HCT116 (cell line): ENCODE measurements at regions of chr17 and their contacts with region 1.

Region 1: GRCh38 chr17:3535253-3535995 is 22.2 kb downstream of the TRPV3 start:
- DNase-seq: peak; percentile 76
- ATAC-seq: peak; percentile 86
- H3K4me3 ChIP-seq: peak overlapping the region; percentile 39 to 54
- H3K27ac ChIP-seq: peak overlapping the region; percentile 60; the same call in 1 of the 2 replicates
- H3K4me1 ChIP-seq: peaks cover 5 to 16% of the 10 kb centered on the region in 2 experiments; a peak in 3 of 4 replicates
- H3K27me3 ChIP-seq: no peaks in the 10 kb centered on the region
- CTCF ChIP-seq: peak; percentile 46 to 80 (median 79)
- POLR2A ChIP-seq: no peak
- RAD21 ChIP-seq: peak; percentile 68

Region 2: GRCh38 chr17:3048767-3049471 is 486.5 kb before region 1 on chr17:
- CTCF ChIA-PET with region 1: no interaction called
- POLR2A ChIA-PET with region 1: no interaction called
- RAD21 ChIA-PET with region 1: no interaction called
- intact Hi-C with region 1: loop called (anchors 10 kb)
- DNase-seq: peak; percentile 98
- ATAC-seq: peak; percentile 99
- H3K4me3 ChIP-seq: peak overlapping the region; percentile 70 to 71
- H3K27ac ChIP-seq: peak overlapping the region; percentile 47; the same call in 1 of the 2 replicates
- H3K4me1 ChIP-seq: peaks cover 5 to 17% of the 10 kb centered on the region in 2 experiments; a peak in 3 of 4 replicates
- H3K27me3 ChIP-seq: no peaks in the 10 kb centered on the region
- CTCF ChIP-seq: peak; percentile 50 to 78 (median 74)
- POLR2A ChIP-seq: peak; percentile 28
- RAD21 ChIP-seq: peak; percentile 96

Region 3: GRCh38 chr17:3385869-3386816 is 149.3 kb before region 1 on chr17 and contains the start of gene OR3A2:
- CTCF ChIA-PET with region 1: no interaction called
- POLR2A ChIA-PET with region 1: no interaction called
- RAD21 ChIA-PET with region 1: no interaction called
- intact Hi-C with region 1: no loop called
- DNase-seq: no peak
- ATAC-seq: no peak
- H3K4me3 ChIP-seq: no peak within 1 kb of the TSS
- H3K27ac ChIP-seq: no peak within 1 kb of the TSS
- H3K4me1 ChIP-seq: no peaks in the 10 kb centered on the region
- H3K27me3 ChIP-seq: peaks cover 30% of the 10 kb centered on the region
- CTCF ChIP-seq: no peak
- POLR2A ChIP-seq: no peak
- RAD21 ChIP-seq: no peak
- total RNA-seq, gene OR3A2: not detected

Region 4: GRCh38 chr17:3502466-3502865 is 33.0 kb before region 1 on chr17:
- CTCF ChIA-PET with region 1: no interaction called
- POLR2A ChIA-PET with region 1: no interaction called
- RAD21 ChIA-PET with region 1: no interaction called
- intact Hi-C with region 1: no loop called
- DNase-seq: no peak
- ATAC-seq: no peak
- H3K4me3 ChIP-seq: no peak overlapping the region
- H3K27ac ChIP-seq: no peak overlapping the region
- H3K4me1 ChIP-seq: no peaks in the 10 kb centered on the region
- H3K27me3 ChIP-seq: peaks cover 3% of the 10 kb centered on the region; the same call in 1 of the 2 replicates
- CTCF ChIP-seq: no peak
- POLR2A ChIP-seq: no peak
- RAD21 ChIP-seq: no peak

Region 5: DNA sequence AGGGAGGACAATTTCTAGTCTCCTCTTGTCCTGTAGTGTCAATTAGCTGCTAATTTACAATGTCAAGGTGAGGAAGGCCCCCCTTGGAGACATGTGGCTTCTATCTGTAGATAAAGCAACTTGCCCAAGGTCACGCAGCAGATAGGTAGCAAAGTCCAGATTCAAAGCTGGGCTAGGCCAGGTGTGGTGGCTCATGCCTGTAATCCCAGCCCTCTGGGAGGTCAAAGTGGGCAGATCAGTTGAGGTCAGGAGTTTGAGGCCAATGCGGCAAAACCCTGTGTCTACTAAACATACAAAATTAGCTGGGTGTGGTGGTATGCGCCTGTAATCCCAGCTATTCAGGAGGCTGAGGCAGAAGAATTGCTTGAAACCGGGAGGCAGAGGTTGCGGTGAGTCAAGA is 11.1 kb after region 1 on chr17:
- CTCF ChIA-PET with region 1: no interaction called
- POLR2A ChIA-PET with region 1: no interaction called
- RAD21 ChIA-PET with region 1: no interaction called
- intact Hi-C with region 1: no loop called
- DNase-seq: no peak
- ATAC-seq: no peak
- H3K4me3 ChIP-seq: no peak overlapping the region
- H3K27ac ChIP-seq: no peak overlapping the region
- H3K4me1 ChIP-seq: peaks cover 0 to 3% of the 10 kb centered on the region in 2 experiments; a peak in 1 of 4 replicates
- H3K27me3 ChIP-seq: no peaks in the 10 kb centered on the region
- CTCF ChIP-seq: no peak
- POLR2A ChIP-seq: no peak
- RAD21 ChIP-seq: no peak

Region 6: DNA sequence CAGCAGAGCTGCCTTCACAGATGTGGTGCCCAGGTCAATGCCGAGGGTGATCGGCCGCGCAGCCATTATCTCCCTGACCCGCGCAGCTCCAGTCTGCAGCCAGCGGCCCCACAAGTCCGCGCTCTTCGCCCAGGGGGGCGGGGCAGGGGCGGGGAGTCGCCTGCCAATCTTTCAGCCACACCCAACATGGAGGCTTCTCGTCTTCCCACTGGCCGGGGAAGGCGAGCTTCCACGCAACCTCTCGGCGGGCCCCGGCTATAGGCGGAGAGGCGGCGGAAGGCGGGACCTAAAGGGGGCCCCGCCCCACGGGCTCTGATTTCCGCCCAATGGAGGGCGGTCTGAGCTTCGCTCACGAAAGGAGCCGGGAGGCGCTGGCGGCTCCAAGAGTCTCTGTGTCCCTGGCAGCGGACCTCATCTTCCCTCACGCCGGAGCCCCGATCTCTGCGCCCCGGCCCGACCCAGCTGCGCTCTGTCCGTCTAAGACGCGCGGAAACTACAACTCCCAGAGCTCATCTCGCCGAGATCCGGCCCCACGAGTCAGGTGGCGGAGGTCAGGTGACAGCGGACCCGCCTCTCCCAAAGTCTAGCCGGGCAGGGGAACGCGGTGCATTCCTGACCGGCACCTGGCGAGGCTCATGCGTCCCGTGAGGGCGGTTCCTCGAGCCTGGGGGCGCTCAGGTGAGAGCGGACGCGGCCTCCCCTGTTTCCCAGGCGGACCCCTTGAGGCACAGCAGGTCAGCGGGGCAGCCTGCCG is 100.9 kb after region 1 on chr17 and contains the starts of genes CTNS and SHPK:
- CTCF ChIA-PET with region 1: interaction called, 5 read pairs
- POLR2A ChIA-PET with region 1: interaction called, 6 read pairs
- RAD21 ChIA-PET with region 1: no interaction called
- intact Hi-C with region 1: loop called (anchors 5 kb)
- DNase-seq: peak; percentile 90
- ATAC-seq: peak; percentile 95
- H3K4me3 ChIP-seq: peak within 1 kb of the TSS; percentile 94
- H3K27ac ChIP-seq: peak within 1 kb of the TSS; percentile 94
- H3K4me1 ChIP-seq: peaks cover 6 to 15% of the 10 kb centered on the region in 2 experiments; a peak in 3 of 4 replicates
- H3K27me3 ChIP-seq: no peaks in the 10 kb centered on the region
- CTCF ChIP-seq: no peak
- POLR2A ChIP-seq: peak; percentile 59
- RAD21 ChIP-seq: no peak
- total RNA-seq, gene CTNS: 7.9 TPM
- total RNA-seq, gene SHPK: 19.6 TPM